ENCODE measurements at regions of chr15 and their contacts with region 1.

Region 1: DNA sequence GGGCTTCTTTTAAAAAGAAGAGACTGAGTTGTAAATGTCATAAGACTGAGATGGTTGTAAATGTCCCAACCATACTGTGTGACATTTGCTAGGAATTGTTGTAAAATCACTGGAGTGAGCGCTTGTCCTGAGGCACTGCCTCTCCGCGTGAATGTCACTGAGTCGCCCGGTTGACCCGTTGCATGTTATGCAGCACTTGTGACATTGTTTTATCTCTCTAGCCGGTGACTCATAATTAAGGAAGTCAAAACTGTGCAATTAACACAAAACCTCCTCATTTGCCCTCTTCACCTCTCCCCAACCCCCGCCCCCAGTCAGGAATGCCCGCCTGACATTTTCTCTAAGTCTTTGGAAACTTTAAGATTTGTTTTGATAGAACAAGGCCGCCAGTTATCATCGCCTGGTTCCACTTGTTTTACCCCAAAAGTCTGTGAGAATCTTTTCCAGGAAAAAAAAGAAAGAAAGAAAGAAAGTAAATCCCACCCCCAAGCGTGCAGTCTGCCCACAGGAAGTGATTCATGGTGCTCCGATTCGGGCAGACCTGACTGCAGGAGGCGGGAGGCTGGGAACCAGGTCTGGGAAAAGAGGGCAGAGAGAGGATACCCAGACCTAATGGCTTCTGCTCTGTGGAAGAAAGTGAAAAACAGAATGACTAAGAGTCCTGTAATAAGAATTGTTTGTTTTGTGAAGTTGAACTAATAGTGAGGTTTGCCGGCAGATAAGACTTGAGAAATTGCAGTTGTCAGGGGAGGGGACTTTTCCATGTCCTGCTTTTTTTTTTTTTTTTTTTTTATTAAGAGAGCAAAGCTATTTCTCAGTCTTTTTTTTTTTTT is 84.8 kb downstream of the SMAD3 start:
- DNase-seq: peak; percentile 97
- H3K4me3 Mint-ChIP-seq: peak overlapping the region; percentile 71
- H3K27ac Mint-ChIP-seq: peak overlapping the region; percentile 94
- H3K4me1 Mint-ChIP-seq: peaks cover 45% of the 10 kb centered on the region
- H3K27me3 Mint-ChIP-seq: no peaks in the 10 kb centered on the region
- CTCF ChIP-seq: no peak

Region 2: GRCh38 chr15:67003586-67003985 is 146.7 kb before region 1 on chr15:
- CTCF ChIA-PET with region 1: no interaction called
- POLR2A ChIA-PET with region 1: no interaction called
- intact Hi-C with region 1: no loop called
- DNase-seq: peak; percentile 69
- H3K4me3 Mint-ChIP-seq: no peak overlapping the region
- H3K27ac Mint-ChIP-seq: peak overlapping the region; percentile 18
- H3K4me1 Mint-ChIP-seq: peaks cover 7% of the 10 kb centered on the region
- H3K27me3 Mint-ChIP-seq: no peaks in the 10 kb centered on the region
- CTCF ChIP-seq: no peak

Region 3: GRCh38 chr15:67107014-67107812 is 43.0 kb before region 1 on chr15:
- CTCF ChIA-PET with region 1: interaction called, 3 read pairs
- POLR2A ChIA-PET with region 1: interaction called, 18 read pairs
- intact Hi-C with region 1: no loop called
- DNase-seq: peak; percentile 99
- H3K4me3 Mint-ChIP-seq: peak overlapping the region; percentile 52
- H3K27ac Mint-ChIP-seq: peak overlapping the region; percentile 98
- H3K4me1 Mint-ChIP-seq: peaks cover 40% of the 10 kb centered on the region
- H3K27me3 Mint-ChIP-seq: no peaks in the 10 kb centered on the region
- CTCF ChIP-seq: no peak

Region 4: DNA sequence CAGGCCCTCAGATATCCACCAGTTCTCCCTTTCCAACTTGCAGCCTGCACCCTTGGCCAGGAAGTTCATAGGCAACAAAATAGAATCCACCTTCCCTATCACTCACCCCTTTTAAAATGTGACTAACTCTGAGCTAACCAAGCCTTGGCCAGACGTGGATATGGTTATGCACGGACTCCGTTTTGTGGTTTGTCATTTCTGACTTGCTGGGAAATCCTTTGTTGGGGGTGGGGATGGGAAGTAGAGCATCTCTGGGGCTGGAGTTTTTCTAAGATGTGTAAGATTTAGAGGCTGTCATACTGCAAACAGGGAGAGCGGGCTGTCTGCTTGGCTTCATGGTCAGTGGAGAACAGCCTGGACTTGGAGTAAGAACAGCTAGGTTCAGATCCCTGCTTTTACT is 22.3 kb before region 1 on chr15:
- CTCF ChIA-PET with region 1: interaction called, 3 read pairs
- POLR2A ChIA-PET with region 1: interaction called, 39 read pairs
- intact Hi-C with region 1: loop called (anchors 2 kb)
- DNase-seq: peak; percentile 92
- H3K4me3 Mint-ChIP-seq: peak overlapping the region; percentile 57
- H3K27ac Mint-ChIP-seq: peak overlapping the region; percentile 81
- H3K4me1 Mint-ChIP-seq: peaks cover 46% of the 10 kb centered on the region
- H3K27me3 Mint-ChIP-seq: no peaks in the 10 kb centered on the region
- CTCF ChIP-seq: no peak

Region 5: DNA sequence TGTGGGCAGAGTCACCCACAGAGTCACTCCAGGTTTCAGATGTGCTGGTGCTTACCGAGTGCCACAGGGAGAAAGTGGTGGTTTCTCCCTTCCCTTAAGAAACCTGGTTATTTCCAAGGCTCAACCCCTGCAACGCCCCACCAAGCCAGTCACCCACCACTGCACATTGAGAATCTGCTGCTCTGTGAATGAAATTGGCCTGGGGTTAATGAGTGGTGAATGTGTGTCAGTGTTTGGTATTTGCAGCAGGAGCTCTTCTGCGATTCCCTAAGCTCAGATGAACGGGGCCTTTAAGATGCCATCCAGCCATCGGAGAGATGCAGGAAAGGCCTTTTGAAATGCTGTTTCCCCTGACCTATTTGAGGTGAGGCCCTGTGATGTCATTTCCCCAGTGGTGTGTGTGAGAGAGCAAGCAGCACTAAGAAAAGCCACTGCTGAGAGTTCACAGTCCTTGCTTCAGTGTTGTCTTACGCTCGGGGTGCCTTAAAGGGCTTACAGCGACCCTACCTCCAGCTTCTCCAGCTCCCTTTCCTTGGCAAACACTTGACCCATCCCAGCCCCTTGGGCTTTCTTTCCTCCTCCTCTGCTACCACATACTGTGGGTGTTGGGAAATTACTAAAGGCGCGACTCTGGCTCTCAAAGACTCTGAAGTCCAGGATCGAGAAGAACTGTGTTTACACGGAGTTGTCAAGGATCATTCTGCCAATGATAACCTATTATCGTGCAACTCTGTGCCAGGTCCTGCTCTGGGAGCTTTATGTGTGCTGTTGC is 16.0 kb before region 1 on chr15:
- CTCF ChIA-PET with region 1: interaction called, 6 read pairs
- POLR2A ChIA-PET with region 1: interaction called, 12 read pairs
- intact Hi-C with region 1: loop called (anchors 2 kb)
- DNase-seq: no peak
- H3K4me3 Mint-ChIP-seq: no peak overlapping the region
- H3K27ac Mint-ChIP-seq: peak overlapping the region; percentile 47
- H3K4me1 Mint-ChIP-seq: peaks cover 26% of the 10 kb centered on the region
- H3K27me3 Mint-ChIP-seq: no peaks in the 10 kb centered on the region
- CTCF ChIP-seq: no peak

Measured in MCF 10A (cell line).